ENCODE measurements at regions of chr9 and their contacts with region 1.

Region 1: GRCh38 chr9:124708633-124709291 is 62.3 kb downstream of the NR6A1 start:
- DNase-seq: no peak
- H3K4me3 ChIP-seq: no peak overlapping the region
- H3K4me3 Mint-ChIP-seq: no peak overlapping the region
- H3K27ac ChIP-seq: no peak overlapping the region
- H3K27ac Mint-ChIP-seq: no peak overlapping the region
- H3K4me1 ChIP-seq: no peaks in the 10 kb centered on the region
- H3K4me1 Mint-ChIP-seq: peaks cover 0 to 2% (median 0%) of the 10 kb centered on the region in 4 donors
- H3K27me3 ChIP-seq: peaks cover 4% of the 10 kb centered on the region
- H3K27me3 Mint-ChIP-seq: peaks cover 14 to 18% of the 10 kb centered on the region in 2 donors

Region 2: DNA sequence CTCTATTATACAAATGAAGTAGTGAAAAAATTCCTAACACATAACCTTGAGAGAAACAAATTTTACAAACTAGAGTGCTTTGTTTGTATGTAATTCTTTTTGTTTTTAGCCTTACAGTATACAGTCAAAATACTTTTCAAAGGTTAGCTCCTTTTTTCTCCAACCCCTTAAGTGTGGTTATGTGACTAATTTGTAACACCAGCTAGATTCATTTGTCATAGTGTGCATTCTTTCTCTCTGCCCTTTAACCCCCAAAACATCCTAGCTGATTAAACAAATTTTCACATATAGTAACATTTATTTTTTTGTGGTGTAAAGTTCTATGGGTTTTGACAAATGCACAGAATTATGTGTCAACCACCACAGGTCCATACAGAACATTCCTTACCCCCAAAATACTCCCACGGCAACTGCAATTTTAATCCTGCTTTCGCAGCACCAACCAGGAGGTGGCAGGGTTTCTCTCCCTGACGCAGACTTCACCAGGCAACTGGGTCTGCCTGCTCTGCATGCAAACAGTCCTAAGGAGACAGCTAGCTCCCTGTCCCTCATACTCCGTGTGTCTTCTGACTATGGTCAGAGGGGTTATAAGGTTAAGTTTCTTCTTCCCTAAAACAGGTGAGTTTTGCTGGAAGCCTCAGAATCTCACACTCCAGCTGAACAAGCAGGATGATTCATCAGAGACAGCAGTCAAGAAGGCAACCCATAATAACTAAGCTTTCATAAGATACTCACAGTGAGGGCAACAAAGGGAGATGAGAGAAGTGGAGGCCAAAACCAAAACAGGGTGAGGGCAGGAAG is 157.1 kb before region 1 on chr9:
- CTCF ChIA-PET with region 1: no interaction called
- POLR2A ChIA-PET with region 1: no interaction called
- intact Hi-C with region 1: loop called (anchors 5 kb)
- DNase-seq: peak in 1 of 5 donors; percentile 0
- H3K4me3 ChIP-seq: no peak overlapping the region
- H3K4me3 Mint-ChIP-seq: no peak overlapping the region
- H3K27ac ChIP-seq: no peak overlapping the region
- H3K27ac Mint-ChIP-seq: no peak overlapping the region
- H3K4me1 ChIP-seq: no peaks in the 10 kb centered on the region
- H3K4me1 Mint-ChIP-seq: peaks cover 0 to 2% (median 0%) of the 10 kb centered on the region in 4 donors
- H3K27me3 ChIP-seq: peaks cover 4% of the 10 kb centered on the region
- H3K27me3 Mint-ChIP-seq: peaks cover 11 to 13% of the 10 kb centered on the region in 2 donors

Region 3: DNA sequence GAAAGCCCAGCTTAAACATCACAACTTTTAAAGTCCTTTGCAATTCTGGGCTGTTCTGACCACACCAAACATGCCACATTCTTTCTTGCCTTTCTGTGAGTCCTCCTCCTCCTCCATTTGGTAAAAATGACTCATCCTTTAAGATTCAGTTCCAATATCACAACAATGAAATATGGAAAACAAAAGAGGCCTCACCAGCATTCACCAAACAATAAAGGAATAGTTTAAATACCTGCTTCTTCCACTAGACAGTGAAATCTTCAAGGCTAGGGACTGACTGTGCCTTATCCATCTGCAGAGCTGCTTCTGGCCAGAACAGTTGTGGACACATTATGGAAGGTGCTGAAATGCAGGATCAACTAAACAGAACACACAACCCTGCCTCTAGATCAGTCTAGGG is 26.4 kb after region 1 on chr9:
- CTCF ChIA-PET with region 1: no interaction called
- POLR2A ChIA-PET with region 1: no interaction called
- intact Hi-C with region 1: no loop called
- DNase-seq: no peak
- H3K4me3 ChIP-seq: no peak overlapping the region
- H3K4me3 Mint-ChIP-seq: no peak overlapping the region
- H3K27ac ChIP-seq: no peak overlapping the region
- H3K27ac Mint-ChIP-seq: no peak overlapping the region
- H3K4me1 ChIP-seq: no peaks in the 10 kb centered on the region
- H3K4me1 Mint-ChIP-seq: no peaks in the 10 kb centered on the region
- H3K27me3 ChIP-seq: no peaks in the 10 kb centered on the region
- H3K27me3 Mint-ChIP-seq: peaks cover 1 to 5% of the 10 kb centered on the region in 2 donors